Mammary epithelial cell (primary cell): ENCODE measurements at regions of chr1 and their contacts with region 1.

Region 1: DNA sequence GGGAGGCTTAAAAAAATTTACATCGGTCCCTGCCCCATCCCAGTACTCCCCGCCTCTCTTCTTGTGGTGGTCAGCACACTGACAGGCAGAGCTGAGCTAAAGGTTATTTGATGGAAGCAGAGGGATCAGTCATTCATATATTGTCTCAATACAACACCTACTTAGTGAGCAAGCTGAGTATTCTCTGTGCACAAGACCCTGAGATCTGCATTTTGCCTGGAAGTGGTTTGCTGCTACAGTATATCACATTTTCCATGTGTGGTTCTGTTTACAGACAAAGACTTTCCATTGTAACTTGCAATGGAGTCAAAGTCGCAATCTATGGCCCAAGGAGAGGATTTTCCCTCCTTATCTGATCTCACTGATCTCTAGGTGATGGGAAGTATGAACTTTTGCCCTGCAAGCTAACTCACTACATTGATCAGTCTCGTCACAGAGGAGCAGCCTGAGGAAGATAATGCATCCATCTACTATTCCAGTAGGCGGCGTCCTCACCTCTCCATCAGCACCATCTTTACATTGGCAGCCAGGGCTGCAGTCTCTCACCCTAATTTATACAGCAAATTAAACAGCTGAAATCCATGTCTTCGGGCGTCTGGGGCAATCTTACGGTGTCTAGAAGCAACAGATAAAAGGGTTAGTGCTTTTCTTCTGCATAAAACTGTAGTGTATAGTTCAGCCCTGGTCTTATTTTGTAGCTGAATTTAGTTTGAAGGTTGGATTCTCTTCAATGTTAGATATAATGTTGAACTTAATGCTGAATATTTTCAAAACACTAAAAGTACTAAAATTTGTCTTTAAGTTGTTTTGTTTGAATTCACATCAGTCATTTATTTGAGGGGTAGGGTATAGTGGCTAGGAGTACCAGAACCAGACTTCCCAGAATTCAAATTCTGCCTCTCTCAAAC is 3.2 kb upstream of the TRAF5 start:
- DNase-seq: peak; percentile 45
- H3K4me3 ChIP-seq: no peak overlapping the region
- H3K27ac ChIP-seq: no peak overlapping the region
- H3K4me1 ChIP-seq: peaks cover 5% of the 10 kb centered on the region
- H3K27me3 ChIP-seq: no peaks in the 10 kb centered on the region
- CTCF ChIP-seq: peak; percentile 93 to 97

Region 2: DNA sequence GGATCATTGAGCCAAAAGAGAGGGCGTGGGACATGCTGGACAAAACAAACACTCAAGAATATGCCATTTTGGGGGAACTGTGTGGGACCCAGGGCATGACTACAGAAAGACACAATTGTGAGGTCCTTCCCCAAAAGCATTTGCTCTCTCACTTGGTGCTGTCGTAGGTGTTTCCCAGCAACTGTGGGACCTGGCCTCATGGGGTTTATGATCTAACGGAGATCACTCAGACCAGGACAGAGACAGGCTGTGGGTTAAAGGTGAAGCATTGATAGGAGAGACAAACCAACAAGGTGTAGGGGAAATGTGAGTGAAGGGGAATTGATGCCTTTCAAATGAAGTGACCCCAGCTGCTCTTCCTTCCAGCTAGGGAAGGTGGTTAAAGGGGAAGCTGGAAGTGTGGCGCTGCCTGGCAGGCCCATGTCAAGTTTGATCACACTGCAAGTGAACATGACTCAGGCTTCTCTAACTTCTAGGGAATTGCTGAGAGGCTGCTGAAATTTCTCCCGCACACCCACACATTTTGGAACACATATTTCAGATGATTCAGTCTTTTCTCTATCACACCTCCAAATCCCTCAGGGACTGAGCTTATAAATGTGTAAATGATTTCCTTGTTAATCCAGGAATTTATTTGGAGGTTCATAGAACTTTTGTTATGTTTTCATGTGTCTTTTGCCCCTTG is 33.5 kb after region 1 on chr1:
- CTCF ChIA-PET with region 1: no interaction called
- dilution Hi-C with region 1: no loop called
- in situ Hi-C with region 1: no loop called
- intact Hi-C with region 1: loop called (anchors 2 kb)
- DNase-seq: peak; percentile 71
- H3K4me3 ChIP-seq: no peak overlapping the region
- H3K27ac ChIP-seq: no peak overlapping the region
- H3K4me1 ChIP-seq: peaks cover 24% of the 10 kb centered on the region
- H3K27me3 ChIP-seq: no peaks in the 10 kb centered on the region
- CTCF ChIP-seq: no peak

Region 3: GRCh38 chr1:211382714-211383480 is 59.5 kb after region 1 on chr1:
- CTCF ChIA-PET with region 1: no interaction called
- dilution Hi-C with region 1: no loop called
- in situ Hi-C with region 1: no loop called
- intact Hi-C with region 1: loop called (anchors 1 kb)
- DNase-seq: peak; percentile 82
- H3K4me3 ChIP-seq: peak overlapping the region; percentile 52 to 70 (median 56)
- H3K27ac ChIP-seq: peak overlapping the region; percentile 83
- H3K4me1 ChIP-seq: peaks cover 4% of the 10 kb centered on the region
- H3K27me3 ChIP-seq: no peaks in the 10 kb centered on the region
- CTCF ChIP-seq: no peak

Region 4: DNA sequence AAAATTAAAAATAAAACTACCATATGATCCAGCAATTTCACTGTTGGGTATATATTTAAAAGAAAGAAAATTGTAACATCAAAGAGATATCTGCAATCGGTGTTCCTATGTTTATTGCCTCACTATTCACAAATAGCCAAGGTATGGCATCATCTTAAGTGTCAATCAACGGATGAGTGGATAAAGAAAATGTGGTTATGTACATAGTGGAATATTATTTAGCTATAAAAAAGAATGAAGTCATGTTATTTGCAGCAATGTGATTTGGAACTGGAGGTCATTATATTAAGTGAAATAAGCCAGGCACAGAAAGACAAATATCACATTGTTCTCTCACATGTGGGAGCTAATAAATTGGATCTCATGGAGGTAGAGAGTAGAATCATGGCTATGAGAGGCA is 92.3 kb after region 1 on chr1:
- CTCF ChIA-PET with region 1: no interaction called
- dilution Hi-C with region 1: no loop called
- in situ Hi-C with region 1: no loop called
- intact Hi-C with region 1: loop called (anchors 5 kb)
- DNase-seq: no peak
- H3K4me3 ChIP-seq: no peak overlapping the region
- H3K27ac ChIP-seq: no peak overlapping the region
- H3K4me1 ChIP-seq: peaks cover 4% of the 10 kb centered on the region
- H3K27me3 ChIP-seq: no peaks in the 10 kb centered on the region
- CTCF ChIP-seq: no peak

Region 5: DNA sequence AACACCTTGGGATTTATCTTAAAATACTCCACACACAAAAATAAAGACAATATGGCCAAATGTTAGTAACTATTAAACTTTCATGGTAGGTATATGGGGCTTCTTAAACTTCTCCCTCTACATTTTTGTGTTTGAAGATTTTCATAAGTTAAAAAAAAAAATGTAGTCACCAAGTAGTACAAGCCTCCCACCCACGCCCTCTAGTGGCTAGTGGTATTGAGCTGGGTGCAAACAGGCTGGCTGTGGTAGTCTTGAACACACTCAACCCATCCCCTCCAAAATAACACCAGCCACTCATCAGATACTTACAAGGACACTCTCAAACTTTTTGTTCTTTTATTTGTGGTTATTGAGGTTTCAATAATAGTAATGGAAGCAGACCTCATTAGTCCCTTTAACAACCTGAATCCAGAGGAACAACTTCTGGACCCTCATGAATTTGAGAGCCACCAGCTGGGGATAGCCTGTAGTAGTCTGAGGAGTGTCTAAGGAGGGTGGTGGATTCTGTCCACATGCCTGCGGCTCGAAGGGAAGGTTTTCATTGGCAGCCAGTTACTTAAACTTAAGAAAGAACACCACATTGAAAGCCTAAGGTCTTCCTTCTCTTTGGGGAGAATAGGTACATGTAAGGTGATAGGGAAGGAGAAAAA is 152.9 kb after region 1 on chr1:
- CTCF ChIA-PET with region 1: no interaction called
- dilution Hi-C with region 1: no loop called
- in situ Hi-C with region 1: loop called in 1 of 2 experiments (anchors 10 kb)
- intact Hi-C with region 1: loop called (anchors 1 kb)
- DNase-seq: peak; percentile 36
- H3K4me3 ChIP-seq: no peak overlapping the region
- H3K27ac ChIP-seq: no peak overlapping the region
- H3K4me1 ChIP-seq: no peaks in the 10 kb centered on the region
- H3K27me3 ChIP-seq: peaks cover 4% of the 10 kb centered on the region
- CTCF ChIP-seq: peak; percentile 90 to 96

Region 6: DNA sequence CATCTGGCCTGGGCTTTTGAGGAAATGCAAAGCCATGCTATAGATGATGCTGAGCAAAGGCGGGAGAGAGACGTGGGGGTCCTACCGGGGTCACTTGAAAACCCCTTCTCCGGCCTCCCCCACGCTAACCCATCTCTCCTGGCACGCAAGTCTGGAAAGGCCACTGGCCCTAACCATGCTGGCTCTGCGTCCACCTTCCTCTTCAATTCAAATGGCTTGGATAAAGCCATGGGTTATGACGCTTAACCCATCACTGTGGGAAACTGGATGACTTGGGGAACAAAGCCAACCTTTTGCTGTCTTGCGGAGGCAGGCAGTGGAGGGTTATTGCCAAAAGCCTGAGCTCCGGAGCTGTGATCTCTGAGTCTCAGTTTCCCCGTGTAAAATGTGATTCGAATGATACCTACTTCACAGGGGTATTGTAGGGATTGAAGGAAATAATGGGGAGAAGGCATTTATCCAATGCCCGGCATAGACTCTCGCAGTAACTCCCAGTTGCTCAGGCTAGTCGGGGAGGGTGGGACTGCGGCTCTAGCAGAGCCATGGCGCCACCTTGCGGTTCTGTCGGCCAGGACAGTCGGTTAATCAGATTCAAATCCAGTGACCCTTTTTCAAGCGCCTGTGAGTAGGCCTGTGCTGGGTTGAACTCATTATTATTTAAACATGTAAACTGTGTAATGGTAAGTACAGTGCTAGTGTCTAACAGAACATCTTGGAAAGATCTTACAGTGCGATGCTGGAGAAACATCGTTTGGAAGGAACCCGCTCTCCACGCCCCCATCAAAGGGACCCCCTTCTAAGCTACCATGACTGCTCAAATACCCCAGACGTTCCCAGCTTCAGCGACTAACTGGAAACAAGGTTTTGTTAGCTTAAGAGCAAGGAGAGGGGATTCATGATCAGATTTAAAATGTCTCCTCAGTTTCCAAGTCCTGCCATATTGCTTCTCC is 331.7 kb after region 1 on chr1:
- CTCF ChIA-PET with region 1: no interaction called
- dilution Hi-C with region 1: loop called (anchors 25 kb)
- in situ Hi-C with region 1: loop called (anchors 10 to 25 kb)
- intact Hi-C with region 1: loop called (anchors 1 kb)
- DNase-seq: peak; percentile 68
- H3K4me3 ChIP-seq: no peak overlapping the region
- H3K27ac ChIP-seq: no peak overlapping the region
- H3K4me1 ChIP-seq: peaks cover 13% of the 10 kb centered on the region
- H3K27me3 ChIP-seq: no peaks in the 10 kb centered on the region
- CTCF ChIP-seq: peak; percentile 86 to 97